CD4-positive, alpha-beta T cell (primary cell): ENCODE measurements at regions of chr6 and their contacts with region 1.

Region 1: DNA sequence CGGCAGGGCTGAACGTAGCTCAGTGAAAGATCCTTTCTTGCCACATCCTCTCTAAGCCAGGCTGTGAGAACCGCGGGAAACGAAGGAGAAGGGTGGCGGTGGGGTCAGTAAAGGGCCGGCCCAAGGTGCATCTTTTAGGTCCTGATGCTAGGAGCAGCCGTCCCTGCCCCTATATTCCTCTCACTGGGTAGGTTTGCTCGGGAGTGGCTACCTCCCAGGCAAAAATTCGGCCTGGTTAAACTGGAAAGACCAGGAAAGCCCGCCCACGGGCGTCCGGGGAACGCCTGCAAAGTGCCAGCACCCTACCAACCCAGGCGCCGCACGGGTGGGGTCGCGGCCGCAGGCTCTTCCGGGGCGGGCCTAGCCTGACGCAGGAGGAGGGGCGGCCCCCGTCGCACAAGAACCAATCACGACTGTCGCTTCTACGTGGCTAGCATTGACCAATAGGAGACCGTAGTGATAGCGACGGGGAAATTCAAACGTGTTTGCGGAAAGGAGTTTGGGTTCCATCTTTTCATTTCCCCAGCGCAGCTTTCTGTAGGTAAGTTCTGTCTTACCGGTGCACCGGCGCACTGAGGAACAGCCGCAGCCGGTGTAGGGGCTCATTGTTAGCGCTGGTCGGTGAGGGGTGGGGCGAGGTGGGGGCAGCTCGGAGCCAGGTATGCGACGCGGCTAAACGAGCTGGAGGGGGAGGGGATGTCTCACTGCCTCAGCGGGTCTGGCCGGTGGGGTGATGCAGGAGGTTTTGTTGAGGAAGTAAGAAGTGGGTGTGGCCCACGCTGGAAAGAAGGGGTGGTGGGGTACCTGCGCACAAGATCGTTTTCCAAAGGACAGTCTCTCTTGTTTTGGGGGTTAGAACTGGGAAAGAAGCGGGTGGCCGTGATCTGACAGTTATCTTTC is at the start of gene TTK:
- DNase-seq: peak; percentile 81 to 97 (median 90)
- ATAC-seq: peak; percentile 97
- H3K4me3 ChIP-seq: peak within 1 kb of the TSS; percentile 67
- H3K4me3 Mint-ChIP-seq: peak within 1 kb of the TSS; percentile 93
- H3K27ac ChIP-seq: peak within 1 kb of the TSS; percentile 85 to 86
- H3K27ac Mint-ChIP-seq: peak within 1 kb of the TSS; percentile 95
- H3K4me1 ChIP-seq: peaks cover 14% of the 10 kb centered on the region
- H3K4me1 Mint-ChIP-seq: peaks cover 21% of the 10 kb centered on the region
- H3K27me3 ChIP-seq: no peaks in the 10 kb centered on the region
- H3K27me3 Mint-ChIP-seq: no peaks in the 10 kb centered on the region
- CTCF ChIP-seq: no peak
- total RNA-seq, gene TTK: 0.45 to 0.60 TPM

Region 2: GRCh38 chr6:78867370-78868040 is 1136.9 kb before region 1 on chr6 and contains the start of gene IRAK1BP1:
- CTCF ChIA-PET with region 1: no interaction called
- POLR2A ChIA-PET with region 1: no interaction called
- intact Hi-C with region 1: loop called in 1 of 2 experiments (anchors 10 kb)
- DNase-seq: peak; percentile 56 to 84 (median 69)
- ATAC-seq: peak; percentile 90
- H3K4me3 ChIP-seq: peak within 1 kb of the TSS; percentile 82
- H3K4me3 Mint-ChIP-seq: peak within 1 kb of the TSS; percentile 98
- H3K27ac ChIP-seq: peak within 1 kb of the TSS; percentile 42 to 67
- H3K27ac Mint-ChIP-seq: peak within 1 kb of the TSS; percentile 91
- H3K4me1 ChIP-seq: peaks cover 5% of the 10 kb centered on the region
- H3K4me1 Mint-ChIP-seq: peaks cover 23% of the 10 kb centered on the region
- H3K27me3 ChIP-seq: no peaks in the 10 kb centered on the region
- H3K27me3 Mint-ChIP-seq: no peaks in the 10 kb centered on the region
- CTCF ChIP-seq: no peak
- total RNA-seq, gene IRAK1BP1: 0.52 to 0.98 TPM

Region 3: GRCh38 chr6:79233611-79234149 is 770.7 kb before region 1 on chr6:
- CTCF ChIA-PET with region 1: no interaction called
- POLR2A ChIA-PET with region 1: no interaction called
- intact Hi-C with region 1: loop called in 1 of 2 experiments (anchors 5 kb)
- DNase-seq: peak; percentile 19 to 78 (median 46)
- ATAC-seq: peak; percentile 28
- H3K4me3 ChIP-seq: peak overlapping the region; percentile 77
- H3K4me3 Mint-ChIP-seq: peak overlapping the region; percentile 99
- H3K27ac ChIP-seq: peak overlapping the region in 1 of 2 donors; percentile 14
- H3K27ac Mint-ChIP-seq: peak overlapping the region; percentile 86
- H3K4me1 ChIP-seq: peaks cover 4% of the 10 kb centered on the region
- H3K4me1 Mint-ChIP-seq: peaks cover 32% of the 10 kb centered on the region
- H3K27me3 ChIP-seq: no peaks in the 10 kb centered on the region
- H3K27me3 Mint-ChIP-seq: no peaks in the 10 kb centered on the region
- CTCF ChIP-seq: peak; percentile 19

Region 4: GRCh38 chr6:79536954-79537747 is 467.3 kb before region 1 on chr6 and contains the start of gene LCA5:
- CTCF ChIA-PET with region 1: no interaction called
- POLR2A ChIA-PET with region 1: interaction called, 3 read pairs
- intact Hi-C with region 1: loop called in 1 of 2 experiments (anchors 10 kb)
- DNase-seq: peak; percentile 60 to 91 (median 76)
- ATAC-seq: peak; percentile 96
- H3K4me3 ChIP-seq: peak within 1 kb of the TSS; percentile 74
- H3K4me3 Mint-ChIP-seq: no peak within 1 kb of the TSS
- H3K27ac ChIP-seq: no peak within 1 kb of the TSS
- H3K27ac Mint-ChIP-seq: no peak within 1 kb of the TSS
- H3K4me1 ChIP-seq: peaks cover 16% of the 10 kb centered on the region
- H3K4me1 Mint-ChIP-seq: no peaks in the 10 kb centered on the region
- H3K27me3 ChIP-seq: peaks cover 0 to 17% of the 10 kb centered on the region in 2 experiments
- H3K27me3 Mint-ChIP-seq: peaks cover 10% of the 10 kb centered on the region
- CTCF ChIP-seq: no peak
- total RNA-seq, gene LCA5: not detected

Region 5: GRCh38 chr6:79949233-79949632 is 55.2 kb before region 1 on chr6:
- CTCF ChIA-PET with region 1: interaction called, 10 read pairs
- POLR2A ChIA-PET with region 1: interaction called, 20 read pairs
- intact Hi-C with region 1: loop called (anchors 1 to 2 kb)
- DNase-seq: peak in 12 of 14 experiments; percentile 4 to 87 (median 32)
- ATAC-seq: peak; percentile 38
- H3K4me3 ChIP-seq: no peak overlapping the region
- H3K4me3 Mint-ChIP-seq: peak overlapping the region; percentile 68
- H3K27ac ChIP-seq: no peak overlapping the region
- H3K27ac Mint-ChIP-seq: no peak overlapping the region
- H3K4me1 ChIP-seq: peaks cover 25% of the 10 kb centered on the region
- H3K4me1 Mint-ChIP-seq: peaks cover 29% of the 10 kb centered on the region
- H3K27me3 ChIP-seq: peaks cover 7 to 31% of the 10 kb centered on the region in 2 experiments
- H3K27me3 Mint-ChIP-seq: peaks cover 23% of the 10 kb centered on the region
- CTCF ChIP-seq: peak; percentile 81

Region 6: GRCh38 chr6:80106418-80107235 is 102.2 kb after region 1 on chr6 and contains the start of gene BCKDHB:
- CTCF ChIA-PET with region 1: no interaction called
- POLR2A ChIA-PET with region 1: interaction called, 12 read pairs
- intact Hi-C with region 1: loop called (anchors 2 to 5 kb)
- DNase-seq: peak; percentile 94 to 99 (median 96)
- ATAC-seq: peak; percentile 97
- H3K4me3 ChIP-seq: peak within 1 kb of the TSS; percentile 80
- H3K4me3 Mint-ChIP-seq: peak within 1 kb of the TSS; percentile 93
- H3K27ac ChIP-seq: peak within 1 kb of the TSS; percentile 23 to 30
- H3K27ac Mint-ChIP-seq: peak within 1 kb of the TSS; percentile 80
- H3K4me1 ChIP-seq: peaks cover 9% of the 10 kb centered on the region
- H3K4me1 Mint-ChIP-seq: peaks cover 36% of the 10 kb centered on the region
- H3K27me3 ChIP-seq: no peaks in the 10 kb centered on the region
- H3K27me3 Mint-ChIP-seq: peaks cover 14% of the 10 kb centered on the region
- CTCF ChIP-seq: no peak
- total RNA-seq, gene BCKDHB: 7.8 to 8.1 TPM

Region 7: DNA sequence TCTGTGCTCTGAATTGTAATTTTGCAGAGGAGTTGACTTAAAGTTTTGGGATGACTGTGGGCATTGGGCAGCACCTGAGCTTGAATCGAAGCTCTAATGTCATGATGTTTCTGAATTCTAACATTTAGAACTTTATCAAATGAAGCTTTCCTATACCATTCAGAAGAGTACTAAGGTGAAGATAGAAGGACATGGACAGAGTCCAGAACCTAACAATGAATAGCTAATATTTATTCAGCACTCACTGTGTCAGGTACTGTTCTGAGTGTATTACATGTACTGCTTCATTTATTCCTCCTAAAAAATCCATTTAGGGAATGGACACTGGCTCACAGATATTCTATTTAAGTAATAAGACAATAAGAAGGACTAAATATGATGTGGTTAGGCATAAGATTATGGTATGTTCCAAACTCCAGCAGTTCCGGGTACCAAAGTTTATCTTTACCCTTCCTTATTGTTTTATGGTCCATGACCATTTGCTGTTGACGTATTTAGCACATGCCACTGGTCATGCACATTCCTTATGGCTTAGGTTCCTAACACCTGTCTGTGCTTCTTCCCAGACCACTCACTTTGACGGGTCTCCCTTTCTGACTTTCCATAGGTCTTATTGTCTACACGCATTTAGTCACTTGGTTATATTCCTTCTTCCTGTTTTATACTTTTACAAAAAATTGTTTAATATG is 122.4 kb after region 1 on chr6:
- CTCF ChIA-PET with region 1: no interaction called
- POLR2A ChIA-PET with region 1: no interaction called
- intact Hi-C with region 1: no loop called
- DNase-seq: no peak
- ATAC-seq: no peak
- H3K4me3 ChIP-seq: no peak overlapping the region
- H3K4me3 Mint-ChIP-seq: no peak overlapping the region
- H3K27ac ChIP-seq: no peak overlapping the region
- H3K27ac Mint-ChIP-seq: no peak overlapping the region
- H3K4me1 ChIP-seq: no peaks in the 10 kb centered on the region
- H3K4me1 Mint-ChIP-seq: peaks cover 7% of the 10 kb centered on the region
- H3K27me3 ChIP-seq: no peaks in the 10 kb centered on the region
- H3K27me3 Mint-ChIP-seq: no peaks in the 10 kb centered on the region
- CTCF ChIP-seq: no peak

Region 8: DNA sequence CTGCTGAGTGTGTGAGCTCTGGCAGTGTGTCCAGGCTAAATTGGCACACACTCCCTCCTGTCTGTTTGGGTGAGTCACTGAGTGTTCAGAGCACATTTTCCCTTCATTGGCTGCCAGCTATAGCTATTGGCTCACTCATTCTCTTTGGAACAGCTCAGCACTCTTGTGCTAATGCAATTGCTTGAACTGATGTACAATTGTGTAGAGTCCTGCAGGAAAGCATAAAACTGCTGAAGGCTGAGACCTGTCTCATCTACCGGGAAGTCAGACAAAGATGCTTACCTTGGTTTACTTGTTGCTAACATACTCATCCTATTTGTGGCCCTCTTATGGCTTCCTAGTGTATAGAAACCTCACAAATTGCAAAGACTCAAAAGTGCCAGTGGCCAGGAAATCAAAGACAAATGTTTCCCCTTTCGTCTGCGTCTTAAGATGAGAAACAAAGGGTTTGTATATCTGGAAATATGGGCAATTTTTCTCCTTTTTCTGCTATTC is 453.1 kb after region 1 on chr6:
- CTCF ChIA-PET with region 1: no interaction called
- POLR2A ChIA-PET with region 1: no interaction called
- intact Hi-C with region 1: no loop called
- DNase-seq: no peak
- ATAC-seq: no peak
- H3K4me3 ChIP-seq: no peak overlapping the region
- H3K4me3 Mint-ChIP-seq: no peak overlapping the region
- H3K27ac ChIP-seq: no peak overlapping the region
- H3K27ac Mint-ChIP-seq: no peak overlapping the region
- H3K4me1 ChIP-seq: no peaks in the 10 kb centered on the region
- H3K4me1 Mint-ChIP-seq: no peaks in the 10 kb centered on the region
- H3K27me3 ChIP-seq: no peaks in the 10 kb centered on the region
- H3K27me3 Mint-ChIP-seq: no peaks in the 10 kb centered on the region
- CTCF ChIP-seq: no peak